Ascending aorta (tissue), 2 donors: ENCODE measurements at regions of chr14 and their contacts with region 1.

Region 1: DNA sequence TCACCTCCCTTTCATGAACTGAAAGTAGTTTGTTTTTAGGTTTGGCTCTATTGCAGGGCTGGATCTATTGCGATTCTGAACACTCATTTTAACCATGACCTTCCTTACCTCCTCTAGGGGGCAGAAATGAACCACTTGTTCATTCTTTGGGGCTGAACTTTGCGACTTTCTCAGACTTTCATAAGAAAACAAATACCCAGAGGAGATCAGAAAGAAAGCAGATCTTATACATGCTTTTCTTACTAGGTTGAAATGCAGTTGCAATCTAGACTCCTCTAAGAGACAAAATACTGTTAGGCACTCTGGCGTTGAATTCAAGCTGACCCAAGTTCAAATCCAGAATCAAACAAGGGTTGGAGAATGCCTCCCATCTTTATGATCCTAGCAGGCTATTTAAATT is 32.6 kb upstream of the PLEKHG3 start:
- DNase-seq: no peak
- H3K4me3 ChIP-seq: no peak overlapping the region
- H3K27ac ChIP-seq: no peak overlapping the region
- H3K4me1 ChIP-seq: peaks cover 0 to 5% of the 10 kb centered on the region in 2 donors
- H3K27me3 ChIP-seq: no peaks in the 10 kb centered on the region
- CTCF ChIP-seq: peak; percentile 70 to 80 (median 78)

Region 2: GRCh38 chr14:64488590-64489099 is 182.9 kb before region 1 on chr14:
- intact Hi-C with region 1: no loop called
- DNase-seq: no peak
- H3K4me3 ChIP-seq: no peak overlapping the region
- H3K27ac ChIP-seq: no peak overlapping the region
- H3K4me1 ChIP-seq: no peaks in the 10 kb centered on the region
- H3K27me3 ChIP-seq: no peaks in the 10 kb centered on the region
- CTCF ChIP-seq: no peak

Region 3: GRCh38 chr14:64745511-64746091 is 74.0 kb after region 1 on chr14:
- intact Hi-C with region 1: loop called (anchors 5 kb)
- DNase-seq: no peak
- H3K4me3 ChIP-seq: no peak overlapping the region
- H3K27ac ChIP-seq: peak overlapping the region; percentile 78 to 84
- H3K4me1 ChIP-seq: peaks cover 6 to 25% of the 10 kb centered on the region in 2 donors
- H3K27me3 ChIP-seq: no peaks in the 10 kb centered on the region
- CTCF ChIP-seq: peak in 1 of 3 experiments; percentile 26